Gastrocnemius medialis (tissue), 4 donors: ENCODE measurements at regions of chr17 and their contacts with region 1.

Region 1: GRCh38 chr17:79839363-79840268 is at the start of gene CBX4:
- DNase-seq: peak; percentile 83 to 90
- ATAC-seq: peak; percentile 83
- H3K4me3 ChIP-seq: peak within 1 kb of the TSS; percentile 72 to 91 (median 75)
- H3K27ac ChIP-seq: peak within 1 kb of the TSS; percentile 73 to 85 (median 82)
- H3K4me1 ChIP-seq: peaks cover 43 to 58% of the 10 kb centered on the region in 2 donors
- H3K27me3 ChIP-seq: peaks cover 46 to 50% (median 48%) of the 10 kb centered on the region in 3 donors
- CTCF ChIP-seq: peak; percentile 58 to 91 (median 82)
- POLR2A ChIP-seq: peak; percentile 76 to 88
- total RNA-seq, gene CBX4: 3.0 to 9.0 (median 5.3) TPM

Region 2: DNA sequence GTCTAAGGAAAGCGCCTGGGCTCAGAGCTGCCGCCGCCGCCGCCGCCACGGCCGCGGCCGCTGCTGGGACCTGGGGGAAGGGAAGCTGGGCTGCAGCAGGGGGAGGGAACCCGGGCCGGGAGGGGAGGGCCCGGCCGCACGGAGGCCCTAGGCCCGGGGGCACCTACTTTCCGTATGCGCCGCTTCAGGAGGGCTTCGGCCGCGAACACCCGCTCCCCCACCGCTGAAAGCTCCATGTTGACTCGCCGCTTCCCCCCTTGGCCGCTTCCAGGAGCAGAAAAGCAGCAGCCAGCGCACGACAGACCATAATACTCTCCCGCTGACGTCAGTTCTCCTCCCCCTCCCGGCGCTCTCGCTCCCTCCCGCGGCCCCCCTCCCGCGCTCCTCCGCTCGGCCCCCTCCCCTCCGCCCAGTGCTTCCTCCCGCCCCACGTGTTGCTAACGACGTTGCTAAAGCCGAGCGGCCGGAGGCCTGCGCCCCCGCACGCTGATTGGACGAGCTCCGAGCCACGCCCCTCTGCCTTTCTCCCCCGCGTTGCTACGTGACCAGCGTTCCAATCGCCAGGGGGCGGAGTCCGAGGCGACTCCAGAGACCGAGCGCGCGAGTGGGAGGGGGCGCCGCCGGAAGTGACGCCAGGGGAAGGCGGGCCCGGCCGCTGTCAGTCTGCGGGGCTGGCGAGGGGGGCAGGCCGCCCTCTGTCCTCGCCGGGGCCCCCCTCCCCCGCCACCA is 42.7 kb before region 1 on chr17 and contains the start of gene CBX8:
- in situ Hi-C with region 1: no loop called
- intact Hi-C with region 1: loop called (anchors 1 kb)
- DNase-seq: peak; percentile 99
- ATAC-seq: peak; percentile 95 to 96
- H3K4me3 ChIP-seq: peak within 1 kb of the TSS; percentile 66 to 87 (median 76)
- H3K27ac ChIP-seq: peak within 1 kb of the TSS; percentile 74 to 82 (median 78)
- H3K4me1 ChIP-seq: peaks cover 17 to 44% of the 10 kb centered on the region in 2 donors
- H3K27me3 ChIP-seq: peaks cover 64 to 65% (median 65%) of the 10 kb centered on the region in 3 donors
- CTCF ChIP-seq: peak in 3 of 5 experiments; percentile 22 to 35 (median 33)
- POLR2A ChIP-seq: peak; percentile 33 to 36
- total RNA-seq, gene CBX8: 0.18 to 0.94 (median 0.49) TPM in 3 of 4 donors, not detected in the other

Region 3: GRCh38 chr17:79808763-79809529 is 30.7 kb before region 1 on chr17:
- in situ Hi-C with region 1: no loop called
- intact Hi-C with region 1: loop called (anchors 2 kb)
- DNase-seq: no peak
- ATAC-seq: no peak
- H3K4me3 ChIP-seq: no peak overlapping the region
- H3K27ac ChIP-seq: no peak overlapping the region
- H3K4me1 ChIP-seq: peaks cover 6 to 35% of the 10 kb centered on the region in 2 donors
- H3K27me3 ChIP-seq: peaks cover 82 to 94% (median 92%) of the 10 kb centered on the region in 3 donors
- CTCF ChIP-seq: peak in 2 of 5 experiments; percentile 5 to 7
- POLR2A ChIP-seq: no peak